Dorsolateral prefrontal cortex (tissue), 120 donors: ENCODE measurements at regions of chr9 and their contacts with region 1.

Region 1: DNA sequence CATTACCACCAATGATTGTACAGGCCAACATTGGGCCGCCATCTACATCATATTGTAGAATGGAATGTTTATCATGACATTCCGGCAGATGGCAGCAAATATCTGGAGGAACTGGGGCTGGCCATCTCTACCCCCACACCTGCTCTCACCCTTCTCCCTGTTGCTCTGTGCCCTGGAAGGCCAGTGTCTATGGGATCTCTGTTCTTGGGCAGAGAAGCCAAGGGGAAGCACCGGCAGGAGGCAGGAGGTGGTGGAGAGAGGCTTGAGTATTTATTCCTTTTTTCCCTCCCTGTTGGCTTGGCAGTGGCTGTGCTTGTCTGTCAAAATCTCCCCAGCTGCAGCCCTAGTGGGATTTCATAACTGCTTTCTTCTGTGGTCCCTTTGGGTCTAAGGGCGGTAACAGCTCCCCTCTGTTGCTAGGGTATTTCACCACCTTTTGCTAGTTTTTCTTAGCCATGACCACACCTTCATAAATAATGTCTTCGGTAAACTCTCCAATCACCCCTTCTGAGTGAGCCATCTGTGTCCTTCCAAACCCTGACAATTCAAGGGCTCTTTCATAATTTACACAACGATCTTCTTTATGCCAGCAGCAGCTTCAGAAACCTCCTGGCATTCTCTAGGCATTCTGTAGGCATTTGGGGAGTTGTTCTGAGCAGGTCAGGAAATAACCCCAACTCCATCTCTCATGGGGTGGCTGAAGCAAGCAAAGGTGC is 225.8 kb downstream of the MELK start:
- DNase-seq: peak in 3 of 10 donors; percentile 28 to 44 (median 39)
- H3K4me3 ChIP-seq: peak overlapping the region in 3 of 59 donors; percentile 2 to 20 (median 7)
- H3K27ac ChIP-seq: peak overlapping the region in 58 of 59 donors; percentile 7 to 99 (median 84)
- H3K27me3 ChIP-seq: no peaks in the 10 kb centered on the region
- CTCF ChIP-seq: peak in 52 of 56 donors; percentile 20 to 74 (median 48)

Region 2: GRCh38 chr9:36632892-36633291 is 165.6 kb before region 1 on chr9:
- intact Hi-C with region 1: loop called in 1 of 2 experiments (anchors 10 kb)
- DNase-seq: no peak
- H3K4me3 ChIP-seq: no peak overlapping the region
- H3K27ac ChIP-seq: no peak overlapping the region
- H3K27me3 ChIP-seq: peaks cover 0 to 4% (median 0%) of the 10 kb centered on the region in 45 donors
- CTCF ChIP-seq: peak; percentile 38 to 78 (median 63)

Region 3: GRCh38 chr9:36738318-36738976 is 60.1 kb before region 1 on chr9:
- intact Hi-C with region 1: no loop called
- DNase-seq: no peak
- H3K4me3 ChIP-seq: no peak overlapping the region
- H3K27ac ChIP-seq: no peak overlapping the region
- H3K27me3 ChIP-seq: peaks cover 0 to 56% (median 16%) of the 10 kb centered on the region in 45 donors
- CTCF ChIP-seq: no peak

Region 4: DNA sequence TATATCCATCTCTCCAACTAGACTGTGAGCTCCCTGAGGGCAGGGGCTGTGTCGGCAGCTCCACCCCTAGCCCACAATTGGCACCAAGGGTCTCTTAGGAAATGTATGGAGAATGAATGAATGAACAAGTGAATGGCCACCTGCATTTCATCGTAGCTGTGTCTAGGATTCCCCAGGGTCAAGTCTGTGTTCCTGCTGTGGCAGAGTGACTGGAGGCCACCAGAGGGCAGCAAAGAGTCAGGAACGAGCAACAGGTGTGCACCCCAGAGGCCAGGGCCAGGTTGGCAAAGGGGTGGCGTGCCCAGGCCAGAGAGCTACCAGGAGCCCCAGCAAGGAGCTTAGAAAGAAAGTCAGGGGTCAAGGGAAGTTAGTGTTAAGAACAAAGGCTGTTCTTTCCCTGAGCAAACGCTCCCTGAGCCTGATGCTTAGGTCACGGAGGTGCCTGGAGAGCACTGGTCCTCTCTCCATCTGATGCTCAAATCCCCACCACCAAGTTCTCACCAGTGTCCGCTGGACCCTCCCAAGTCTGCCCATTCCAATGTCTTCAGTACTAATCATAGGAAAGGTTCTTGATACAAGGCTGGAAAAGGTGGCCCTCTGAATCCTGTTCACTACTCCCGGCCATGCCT is 74.9 kb after region 1 on chr9:
- intact Hi-C with region 1: loop called (anchors 5 kb)
- DNase-seq: peak in 8 of 10 donors; percentile 36 to 67 (median 50)
- H3K4me3 ChIP-seq: no peak overlapping the region
- H3K27ac ChIP-seq: no peak overlapping the region
- H3K27me3 ChIP-seq: peaks cover 0 to 6% (median 0%) of the 10 kb centered on the region in 45 donors
- CTCF ChIP-seq: peak; percentile 39 to 86 (median 77)

Region 5: DNA sequence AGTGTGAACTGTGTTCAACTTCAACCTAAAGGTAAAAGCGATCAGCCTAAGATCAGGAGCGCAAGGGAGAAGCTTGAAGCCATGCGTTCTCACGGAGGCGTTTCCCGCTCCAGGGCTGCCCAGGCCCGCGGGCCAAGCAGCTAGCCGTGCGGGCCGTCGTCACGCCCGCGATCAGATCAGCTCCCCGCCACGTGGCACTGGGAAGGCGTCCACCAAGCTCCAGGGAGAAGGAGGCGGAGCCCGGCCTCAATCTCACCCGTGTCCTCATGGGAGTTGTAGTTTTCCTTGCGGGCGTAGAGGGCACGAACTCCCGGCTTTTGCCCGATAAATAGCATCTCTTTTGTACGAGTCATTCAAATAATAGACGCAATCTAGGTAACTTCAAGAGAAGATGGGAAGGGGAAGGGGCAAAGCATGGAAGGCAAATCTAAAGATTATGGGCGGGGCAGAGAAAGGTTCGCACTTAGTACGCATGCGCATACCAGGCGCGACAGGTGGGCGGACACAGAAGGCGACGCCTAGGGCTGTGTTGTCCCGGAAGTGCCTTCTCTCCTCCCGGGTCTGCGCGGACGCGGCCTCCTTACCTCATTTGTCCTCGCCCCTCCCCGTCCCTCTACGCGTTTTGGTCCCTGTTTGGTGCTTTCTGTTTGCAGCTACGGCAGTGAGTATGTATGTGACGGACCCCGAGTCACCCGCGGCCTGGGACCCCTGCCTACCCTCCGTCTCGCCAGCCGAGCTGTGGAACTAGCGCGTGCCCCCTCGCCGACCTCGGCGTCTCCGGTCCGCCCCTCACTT is 281.1 kb after region 1 on chr9:
- intact Hi-C with region 1: loop called in 1 of 2 experiments (anchors 5 kb)
- DNase-seq: peak; percentile 86 to 95 (median 92)
- H3K4me3 ChIP-seq: peak overlapping the region; percentile 40 to 98 (median 89)
- H3K27ac ChIP-seq: peak overlapping the region in 57 of 59 donors; percentile 10 to 90 (median 78)
- H3K27me3 ChIP-seq: no peaks in the 10 kb centered on the region
- CTCF ChIP-seq: peak in 16 of 56 donors; percentile 5 to 50 (median 18)